HCT116 (cell line): ENCODE measurements at regions of chr11 and their contacts with region 1.

Region 1: GRCh38 chr11:126440792-126441514 is 85.5 kb downstream of the ST3GAL4 start:
- DNase-seq: peak; percentile 43
- ATAC-seq: peak; percentile 95
- H3K4me3 ChIP-seq: no peak overlapping the region; a peak in 1 of 4 replicates
- H3K27ac ChIP-seq: no peak overlapping the region
- H3K4me1 ChIP-seq: peaks cover 0 to 5% of the 10 kb centered on the region in 2 experiments; a peak in 1 of 4 replicates
- H3K27me3 ChIP-seq: peaks cover 7% of the 10 kb centered on the region; the same call in 1 of the 2 replicates
- CTCF ChIP-seq: peak; percentile 79 to 96 (median 87)
- POLR2A ChIP-seq: no peak
- RAD21 ChIP-seq: peak; percentile 98

Region 2: DNA sequence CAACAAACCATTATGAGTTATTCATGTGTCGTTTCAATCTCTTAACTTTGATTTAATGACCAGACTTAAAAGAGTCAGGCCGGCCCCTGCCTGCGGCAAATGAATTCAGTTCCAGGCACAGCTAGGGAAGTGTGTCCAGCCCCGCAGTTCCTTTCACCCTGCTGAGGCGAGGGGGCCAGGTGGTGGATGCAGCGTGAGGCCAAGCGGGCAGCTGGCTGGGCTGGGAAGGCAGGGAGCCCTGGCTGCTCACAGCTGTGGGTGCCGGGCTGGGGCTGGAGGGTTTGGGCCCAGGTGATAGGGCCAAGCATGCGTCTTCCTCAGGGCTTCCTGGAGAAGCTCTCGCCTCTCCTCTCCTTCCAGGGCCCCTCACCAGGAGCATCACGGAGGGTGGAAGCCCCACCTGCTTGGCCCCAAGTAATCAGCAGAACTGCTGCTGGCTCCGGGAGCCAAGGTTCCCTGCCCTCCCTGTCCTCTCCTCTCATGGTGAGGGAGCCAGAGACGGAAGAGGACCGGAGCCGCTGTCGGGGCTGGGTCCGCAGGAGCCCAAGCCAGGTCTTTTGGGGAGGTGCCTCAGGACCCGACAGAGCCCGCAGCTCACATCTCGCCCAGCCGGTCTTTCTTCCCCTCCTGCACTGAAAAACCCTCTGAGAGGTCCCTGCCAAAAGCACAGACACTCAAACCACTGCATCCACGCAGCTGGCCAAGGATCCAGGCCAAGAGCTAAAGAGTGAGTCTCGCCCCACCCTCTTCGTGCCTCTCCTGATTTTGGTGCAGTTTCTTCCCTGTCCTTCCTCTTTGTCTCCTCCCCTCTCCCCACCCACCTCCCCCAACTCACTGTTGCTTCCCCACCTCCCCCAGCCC is 11.5 kb after region 1 on chr11:
- CTCF ChIA-PET with region 1: no interaction called
- POLR2A ChIA-PET with region 1: no interaction called
- RAD21 ChIA-PET with region 1: no interaction called
- intact Hi-C with region 1: no loop called
- DNase-seq: no peak
- ATAC-seq: no peak
- H3K4me3 ChIP-seq: no peak overlapping the region
- H3K27ac ChIP-seq: no peak overlapping the region
- H3K4me1 ChIP-seq: no peaks in the 10 kb centered on the region
- H3K27me3 ChIP-seq: no peaks in the 10 kb centered on the region
- CTCF ChIP-seq: no peak
- POLR2A ChIP-seq: no peak
- RAD21 ChIP-seq: no peak

Region 3: DNA sequence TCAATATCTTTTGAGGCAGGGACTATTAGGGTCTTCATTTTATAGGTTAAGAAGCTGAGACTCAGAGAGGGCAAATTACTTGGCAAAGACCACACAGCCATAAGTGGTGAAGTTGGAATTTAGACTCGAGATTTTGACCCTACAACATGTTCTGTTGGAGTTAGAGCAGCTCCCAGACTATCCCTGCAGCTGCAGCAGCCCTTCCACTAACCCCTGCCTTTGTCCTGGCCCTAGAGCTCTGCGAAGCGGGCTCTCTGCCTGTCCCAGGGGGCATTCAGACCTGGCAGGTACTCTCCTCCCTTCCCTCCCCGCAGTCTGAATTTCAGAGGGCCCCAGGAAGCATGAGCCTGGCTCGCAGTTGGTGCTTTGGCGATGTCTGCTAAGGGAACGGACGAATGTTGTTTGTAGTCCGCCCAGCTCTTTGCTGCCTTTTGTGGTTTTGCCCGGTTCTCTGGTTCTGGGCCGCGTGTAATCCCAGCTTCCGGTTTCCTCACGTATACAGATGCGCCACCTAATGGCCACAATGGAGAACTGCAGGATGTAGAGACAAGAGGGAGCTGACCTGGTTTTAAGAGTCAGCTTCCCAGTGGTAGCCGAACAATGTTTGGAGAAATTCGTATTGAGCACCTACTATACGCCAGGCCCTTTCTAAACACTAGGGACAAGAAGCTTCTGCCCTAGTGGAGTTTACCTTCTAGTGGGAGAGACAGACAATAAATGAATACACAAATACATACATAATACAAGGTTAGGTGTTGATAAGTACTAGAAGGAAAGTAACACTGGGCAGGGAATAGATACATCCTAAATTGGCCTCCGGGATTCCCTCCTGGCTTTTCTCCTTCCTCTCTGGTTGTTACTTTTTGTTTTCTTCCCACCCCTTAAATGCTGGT is 39.7 kb after region 1 on chr11:
- CTCF ChIA-PET with region 1: interaction called, 19 read pairs
- POLR2A ChIA-PET with region 1: interaction called, 3 read pairs
- RAD21 ChIA-PET with region 1: interaction called, 6 to 7 read pairs
- intact Hi-C with region 1: loop called (anchors 1 kb)
- DNase-seq: peak; percentile 79
- ATAC-seq: peak; percentile 90
- H3K4me3 ChIP-seq: no peak overlapping the region
- H3K27ac ChIP-seq: no peak overlapping the region
- H3K4me1 ChIP-seq: peaks cover 2 to 7% of the 10 kb centered on the region in 2 experiments; a peak in 3 of 4 replicates
- H3K27me3 ChIP-seq: no peaks in the 10 kb centered on the region
- CTCF ChIP-seq: peak; percentile 83 to 96 (median 95)
- POLR2A ChIP-seq: no peak
- RAD21 ChIP-seq: peak; percentile 81

Region 4: DNA sequence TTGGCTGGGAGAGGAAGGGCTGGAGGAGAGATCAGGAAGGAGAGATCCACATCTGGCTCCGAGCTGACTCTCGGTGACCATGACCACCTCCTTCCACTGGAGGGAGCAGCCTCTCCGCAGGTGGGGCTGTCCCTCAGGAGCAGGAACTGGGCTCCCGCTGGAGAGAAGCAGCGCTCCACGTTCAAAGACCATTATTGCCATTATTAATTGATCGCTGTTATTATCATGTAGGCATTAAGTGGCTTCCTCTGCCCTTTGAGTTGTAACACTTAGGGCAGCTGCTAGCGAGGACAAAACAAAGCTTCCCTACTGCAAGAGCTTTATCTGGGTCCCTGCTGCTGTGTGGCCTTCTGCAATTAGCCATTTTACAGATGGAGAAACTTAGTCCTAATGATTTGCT is 166.4 kb after region 1 on chr11:
- CTCF ChIA-PET with region 1: interaction called, 4 read pairs
- POLR2A ChIA-PET with region 1: no interaction called
- RAD21 ChIA-PET with region 1: no interaction called
- intact Hi-C with region 1: loop called (anchors 5 kb)
- DNase-seq: peak; percentile 31
- ATAC-seq: peak; percentile 99
- H3K4me3 ChIP-seq: peak overlapping the region in 1 of 2 experiments; percentile 20; a peak in 1 of 4 replicates
- H3K27ac ChIP-seq: no peak overlapping the region
- H3K4me1 ChIP-seq: peaks cover 0 to 4% of the 10 kb centered on the region in 2 experiments; a peak in 2 of 4 replicates
- H3K27me3 ChIP-seq: peaks cover 24% of the 10 kb centered on the region; the same call in 1 of the 2 replicates
- CTCF ChIP-seq: peak; percentile 55 to 83 (median 82)
- POLR2A ChIP-seq: no peak
- RAD21 ChIP-seq: peak; percentile 86

Region 5: DNA sequence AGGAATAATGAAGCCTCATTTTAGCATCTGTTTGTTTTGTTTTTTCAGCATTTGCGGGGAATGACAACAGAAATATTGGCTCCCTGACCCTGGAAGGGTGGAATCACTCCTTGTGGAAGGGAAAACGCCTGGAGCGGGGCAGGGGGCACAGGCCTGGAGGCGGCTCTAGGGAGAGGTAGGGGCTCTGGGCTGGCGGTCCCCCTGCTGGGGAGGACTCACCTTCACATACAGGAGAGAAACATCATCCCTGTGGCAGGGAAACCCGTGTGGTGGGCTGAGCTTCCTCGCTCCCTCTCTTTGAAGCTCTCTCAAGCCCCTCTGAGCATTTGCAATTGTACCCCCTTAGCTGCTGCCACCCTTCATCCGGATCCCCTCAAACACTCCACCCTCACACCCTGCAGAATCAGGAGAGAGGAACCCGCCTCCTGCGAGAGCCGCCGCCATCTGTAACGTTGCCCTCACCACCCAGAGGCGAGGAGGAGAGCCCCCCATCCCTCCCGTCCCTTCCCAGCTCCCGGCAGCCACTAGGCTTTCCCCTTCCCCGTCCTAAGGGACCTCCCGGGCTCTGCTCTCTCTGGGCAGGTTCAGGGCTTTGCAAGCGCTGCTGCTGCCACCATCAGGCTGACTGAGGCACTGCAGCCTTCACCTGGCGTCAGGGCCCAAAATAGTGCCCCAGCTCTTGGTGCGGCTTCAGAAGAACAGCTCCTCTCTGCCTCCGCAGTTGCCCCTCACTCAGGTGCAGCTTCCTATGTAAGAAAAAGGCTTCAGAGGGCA is 549.2 kb after region 1 on chr11:
- CTCF ChIA-PET with region 1: interaction called, 8 read pairs
- POLR2A ChIA-PET with region 1: no interaction called
- RAD21 ChIA-PET with region 1: no interaction called
- intact Hi-C with region 1: loop called (anchors 1 kb)
- DNase-seq: peak; percentile 18
- ATAC-seq: peak; percentile 97
- H3K4me3 ChIP-seq: no peak overlapping the region
- H3K27ac ChIP-seq: no peak overlapping the region
- H3K4me1 ChIP-seq: no peaks in the 10 kb centered on the region
- H3K27me3 ChIP-seq: 0 out of 2 replicates have a peak, but pooled peaks cover 6% of the 10 kb centered on the region
- CTCF ChIP-seq: peak; percentile 49 to 96 (median 85); a peak in 5 of 6 replicates
- POLR2A ChIP-seq: no peak
- RAD21 ChIP-seq: peak; percentile 82

Region 6: GRCh38 chr11:127345819-127346459 is 905.0 kb after region 1 on chr11:
- CTCF ChIA-PET with region 1: no interaction called
- POLR2A ChIA-PET with region 1: no interaction called
- RAD21 ChIA-PET with region 1: no interaction called
- intact Hi-C with region 1: loop called (anchors 2 kb)
- DNase-seq: no peak
- ATAC-seq: no peak
- H3K4me3 ChIP-seq: no peak overlapping the region
- H3K27ac ChIP-seq: no peak overlapping the region
- H3K4me1 ChIP-seq: no peaks in the 10 kb centered on the region
- H3K27me3 ChIP-seq: no peaks in the 10 kb centered on the region
- CTCF ChIP-seq: peak in 2 of 3 experiments; percentile 52 to 57; a peak in 4 of 6 replicates
- POLR2A ChIP-seq: no peak
- RAD21 ChIP-seq: peak; percentile 22; the same call in 1 of the 2 replicates

Region 7: GRCh38 chr11:128039140-128040021 is 1598.4 kb after region 1 on chr11:
- CTCF ChIA-PET with region 1: no interaction called
- POLR2A ChIA-PET with region 1: no interaction called
- RAD21 ChIA-PET with region 1: no interaction called
- intact Hi-C with region 1: loop called (anchors 10 kb)
- DNase-seq: no peak
- ATAC-seq: no peak
- H3K4me3 ChIP-seq: no peak overlapping the region
- H3K27ac ChIP-seq: no peak overlapping the region
- H3K4me1 ChIP-seq: no peaks in the 10 kb centered on the region
- H3K27me3 ChIP-seq: no peaks in the 10 kb centered on the region
- CTCF ChIP-seq: no peak
- POLR2A ChIP-seq: no peak
- RAD21 ChIP-seq: no peak

Region 8: GRCh38 chr11:128157423-128158298 is 1716.7 kb after region 1 on chr11:
- CTCF ChIA-PET with region 1: no interaction called
- POLR2A ChIA-PET with region 1: no interaction called
- RAD21 ChIA-PET with region 1: no interaction called
- intact Hi-C with region 1: loop called (anchors 1 kb)
- DNase-seq: peak; percentile 72
- ATAC-seq: peak; percentile 90
- H3K4me3 ChIP-seq: no peak overlapping the region
- H3K27ac ChIP-seq: no peak overlapping the region
- H3K4me1 ChIP-seq: no peaks in the 10 kb centered on the region; a peak in 1 of 4 replicates
- H3K27me3 ChIP-seq: peaks cover 18% of the 10 kb centered on the region; the same call in 1 of the 2 replicates
- CTCF ChIP-seq: peak; percentile 73 to 99 (median 94)
- POLR2A ChIP-seq: no peak
- RAD21 ChIP-seq: peak; percentile 78